ENCODE measurements at regions of chr4 and their contacts with region 1.

Region 1: DNA sequence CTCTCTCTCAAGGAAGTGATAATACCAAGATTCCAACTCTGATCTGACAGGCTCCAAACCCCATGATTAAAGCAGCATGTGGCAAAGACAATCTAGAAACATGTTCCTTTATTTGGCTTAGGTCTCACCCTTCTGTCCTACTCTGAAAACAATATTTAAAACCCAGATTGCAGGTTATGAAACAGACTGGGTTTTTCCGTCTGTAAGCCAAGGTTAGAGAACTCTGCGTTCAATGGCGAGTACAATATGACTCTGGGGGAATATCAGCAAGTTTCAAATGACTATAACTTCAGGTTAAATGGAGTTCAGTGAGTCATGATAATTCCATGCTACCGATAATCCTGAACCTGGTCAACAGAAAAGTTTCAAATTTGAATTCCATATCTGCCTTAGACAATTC is 50.8 kb downstream of the ANAPC10 start:
- DNase-seq: no peak
- ATAC-seq: no peak
- H3K4me3 Mint-ChIP-seq: no peak overlapping the region
- H3K27ac Mint-ChIP-seq: no peak overlapping the region
- H3K4me1 Mint-ChIP-seq: no peaks in the 10 kb centered on the region
- H3K27me3 Mint-ChIP-seq: no peaks in the 10 kb centered on the region

Region 2: DNA sequence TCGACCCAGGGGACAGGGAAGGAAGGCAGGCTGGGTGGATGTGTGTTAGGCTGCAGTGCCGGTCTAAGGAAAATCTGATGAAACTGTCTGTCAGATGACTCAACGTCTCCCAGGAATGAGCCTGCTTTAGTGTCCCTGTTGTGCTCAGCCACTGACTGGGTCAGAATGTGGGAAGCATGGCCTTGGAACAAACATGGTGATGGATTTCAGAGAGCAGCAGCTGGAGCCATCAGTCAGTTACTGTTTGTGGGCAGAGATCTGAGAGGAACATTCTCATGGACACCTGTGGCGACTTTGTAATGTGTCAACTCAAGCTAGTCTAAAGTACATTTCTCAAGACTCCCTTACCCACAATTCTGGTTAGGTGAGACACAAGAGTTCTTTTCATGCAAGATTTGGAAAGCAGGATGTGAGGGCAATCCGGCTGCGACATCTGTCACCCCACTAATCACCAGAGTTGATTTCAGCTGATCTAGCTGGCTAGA is 12.4 kb before region 1 on chr4:
- CTCF ChIA-PET with region 1: no interaction called
- DNase-seq: no peak
- ATAC-seq: no peak
- H3K4me3 Mint-ChIP-seq: no peak overlapping the region
- H3K27ac Mint-ChIP-seq: no peak overlapping the region
- H3K4me1 Mint-ChIP-seq: no peaks in the 10 kb centered on the region
- H3K27me3 Mint-ChIP-seq: no peaks in the 10 kb centered on the region

Region 3: GRCh38 chr4:145061318-145061920 is 14.3 kb after region 1 on chr4:
- CTCF ChIA-PET with region 1: interaction called, 10 read pairs
- DNase-seq: no peak
- ATAC-seq: peak; percentile 63
- H3K4me3 Mint-ChIP-seq: no peak overlapping the region
- H3K27ac Mint-ChIP-seq: no peak overlapping the region
- H3K4me1 Mint-ChIP-seq: peaks cover 19% of the 10 kb centered on the region
- H3K27me3 Mint-ChIP-seq: no peaks in the 10 kb centered on the region

Region 4: DNA sequence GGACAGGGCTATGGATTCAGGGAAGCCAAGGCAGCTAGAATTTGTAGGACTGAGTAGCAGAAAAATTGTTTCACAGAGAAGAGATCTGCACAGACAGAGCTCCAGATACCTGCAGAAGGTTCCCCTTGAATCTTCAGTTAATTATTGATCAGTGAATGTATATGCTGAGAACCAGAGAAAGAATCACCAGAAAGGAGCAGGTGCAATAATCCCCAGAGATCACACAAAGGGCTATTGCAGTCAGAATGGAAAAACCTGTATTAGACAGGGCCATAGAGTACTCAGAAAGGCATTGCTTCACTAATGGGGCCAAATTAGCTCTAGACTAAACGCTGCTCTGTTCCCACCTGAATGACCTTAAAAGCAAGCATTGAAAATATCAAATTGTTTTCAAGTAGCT is 399.0 kb after region 1 on chr4:
- CTCF ChIA-PET with region 1: no interaction called
- DNase-seq: no peak
- ATAC-seq: no peak
- H3K4me3 Mint-ChIP-seq: no peak overlapping the region
- H3K27ac Mint-ChIP-seq: no peak overlapping the region
- H3K4me1 Mint-ChIP-seq: no peaks in the 10 kb centered on the region
- H3K27me3 Mint-ChIP-seq: peaks cover 8% of the 10 kb centered on the region

Measured in activated CD8-positive, alpha-beta memory T cell treated with anti-CD3 and anti-CD28 coated beads, Interleukin-2, amount 10 ng/mL, durations not matched to agents 7 days and 5 days (primary cell).